Transverse colon (tissue), 4 donors: ENCODE measurements at regions of chr1 and their contacts with region 1.

Region 1: DNA sequence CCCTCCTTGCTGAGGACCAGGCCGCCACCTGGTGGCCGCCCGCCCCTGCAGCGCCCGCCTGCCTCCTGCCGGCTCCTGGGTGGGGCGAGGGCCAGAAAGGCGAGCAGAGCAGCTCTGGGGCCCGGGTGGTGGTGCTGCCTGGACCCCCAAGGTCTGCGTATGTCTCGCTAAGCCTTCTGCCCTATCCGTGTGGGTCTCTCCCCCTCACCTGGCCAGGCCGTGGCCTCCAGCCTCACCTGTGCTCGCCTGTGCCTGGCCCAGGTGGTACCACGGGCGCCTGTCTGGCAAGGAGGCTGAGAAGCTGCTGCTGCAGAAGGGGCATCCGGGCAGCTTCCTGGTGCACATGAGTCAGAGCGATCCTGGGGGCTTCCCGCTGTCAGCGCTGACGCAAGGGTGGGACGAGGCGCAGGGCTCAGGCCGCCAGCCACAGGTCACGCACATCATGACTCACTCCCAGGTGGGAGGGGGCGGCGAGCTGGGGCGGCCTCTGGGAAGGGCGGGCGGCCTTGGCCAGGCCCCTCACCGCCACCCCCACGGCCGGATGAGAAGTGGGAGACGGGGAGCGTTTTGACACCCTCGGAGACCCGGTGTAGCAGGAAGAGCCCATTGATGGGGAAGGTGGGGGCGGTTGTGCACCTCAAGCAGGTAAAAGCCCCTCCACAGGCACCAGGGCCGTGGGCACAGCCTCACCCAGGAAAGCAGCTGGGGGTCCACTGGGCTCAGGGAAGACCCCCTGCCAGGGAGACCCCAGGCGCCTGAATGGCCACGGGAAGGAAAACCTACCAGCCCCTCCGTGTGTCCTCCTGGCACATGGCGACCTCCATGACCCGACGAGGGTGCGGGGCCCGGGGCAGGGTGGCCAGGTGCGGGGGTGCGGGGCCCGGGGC is 9.9 kb downstream of the RNF223 start:
- DNase-seq: peak; percentile 76
- H3K4me3 ChIP-seq: no peak overlapping the region
- H3K27ac ChIP-seq: no peak overlapping the region
- H3K4me1 ChIP-seq: peaks cover 16 to 42% (median 35%) of the 10 kb centered on the region in 4 donors
- H3K27me3 ChIP-seq: peaks cover 67% of the 10 kb centered on the region
- CTCF ChIP-seq: peak; percentile 86 to 97 (median 92)
- EP300 ChIP-seq: no peak
- POLR2A ChIP-seq: no peak

Region 2: DNA sequence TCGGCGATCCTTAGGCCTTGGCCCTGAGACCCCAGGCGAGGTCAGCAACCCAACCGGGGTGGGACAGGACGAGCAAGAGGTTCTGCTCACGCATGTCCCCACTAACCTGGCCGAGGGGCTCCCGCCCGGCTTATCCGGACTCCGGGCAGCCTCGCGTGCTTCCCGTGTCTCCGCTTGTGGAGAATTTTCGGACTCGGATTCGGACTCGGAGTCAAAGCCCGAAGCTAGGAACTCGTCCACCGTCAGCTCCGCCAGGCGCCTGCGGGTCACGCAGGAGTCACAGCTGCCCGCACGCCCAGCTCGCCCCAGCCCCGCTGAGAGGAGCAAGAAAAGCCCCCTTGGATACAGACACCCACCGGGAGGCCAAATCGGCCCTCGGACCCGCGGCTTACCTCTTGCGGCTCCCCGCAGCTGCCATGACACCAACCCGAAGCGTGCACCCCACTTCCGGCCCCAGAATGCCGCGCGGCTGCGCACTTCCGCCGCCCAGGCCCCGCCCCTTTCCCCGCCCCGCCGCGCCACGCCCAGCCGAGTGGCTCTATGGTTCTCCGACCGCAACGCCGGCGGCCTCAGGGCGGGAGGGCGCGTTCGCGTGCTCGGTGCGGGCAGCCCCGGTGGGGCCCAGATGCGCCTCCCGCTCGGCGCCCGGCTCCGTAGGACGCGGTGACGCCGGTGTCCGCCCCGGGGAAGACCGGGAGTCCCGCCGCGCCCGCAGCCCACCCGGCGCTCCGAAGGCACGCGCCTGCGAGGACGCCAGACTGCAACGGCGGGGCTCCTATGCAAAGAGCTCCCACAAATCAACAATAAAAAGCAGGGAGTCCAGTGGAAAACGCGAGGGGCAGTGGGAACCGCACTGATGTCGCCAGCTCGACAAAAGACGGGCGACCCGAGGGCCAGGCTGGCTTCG is 105.1 kb before region 1 on chr1 and contains the start of gene NOC2L:
- in situ Hi-C with region 1: no loop called
- intact Hi-C with region 1: no loop called
- DNase-seq: peak; percentile 96
- H3K4me3 ChIP-seq: peak within 1 kb of the TSS; percentile 70 to 96 (median 86)
- H3K27ac ChIP-seq: peak within 1 kb of the TSS; percentile 45 to 82 (median 64)
- H3K4me1 ChIP-seq: peaks cover 13 to 33% (median 26%) of the 10 kb centered on the region in 4 donors
- H3K27me3 ChIP-seq: no peaks in the 10 kb centered on the region
- CTCF ChIP-seq: no peak
- EP300 ChIP-seq: no peak
- POLR2A ChIP-seq: no peak
- total RNA-seq, gene NOC2L: 17.6 to 50.4 (median 31.6) TPM

Region 3: GRCh38 chr1:983799-984473 is 80.3 kb before region 1 on chr1:
- in situ Hi-C with region 1: no loop called
- intact Hi-C with region 1: loop called (anchors 1 kb)
- DNase-seq: peak; percentile 51
- H3K4me3 ChIP-seq: no peak overlapping the region
- H3K27ac ChIP-seq: no peak overlapping the region
- H3K4me1 ChIP-seq: peaks cover 0 to 6% (median 2%) of the 10 kb centered on the region in 4 donors
- H3K27me3 ChIP-seq: peaks cover 72% of the 10 kb centered on the region
- CTCF ChIP-seq: peak; percentile 55 to 99 (median 96)
- EP300 ChIP-seq: no peak
- POLR2A ChIP-seq: no peak

Region 4: GRCh38 chr1:1806890-1807289 is 742.7 kb after region 1 on chr1:
- in situ Hi-C with region 1: no loop called
- intact Hi-C with region 1: no loop called
- DNase-seq: no peak
- H3K4me3 ChIP-seq: no peak overlapping the region
- H3K27ac ChIP-seq: no peak overlapping the region
- H3K4me1 ChIP-seq: no peaks in the 10 kb centered on the region
- H3K27me3 ChIP-seq: no peaks in the 10 kb centered on the region
- CTCF ChIP-seq: no peak
- EP300 ChIP-seq: no peak
- POLR2A ChIP-seq: no peak